AG04449 (cell line): ENCODE measurements at regions of chr18 and their contacts with region 1.

Region 1: GRCh38 chr18:24488824-24489493 is 28.5 kb downstream of the HRH4 start:
- DNase-seq: no peak
- H3K4me3 ChIP-seq: no peak overlapping the region
- CTCF ChIP-seq: peak; percentile 34

Region 2: GRCh38 chr18:24270358-24270936 is 218.5 kb before region 1 on chr18:
- CTCF ChIA-PET with region 1: no interaction called
- POLR2A ChIA-PET with region 1: no interaction called
- DNase-seq: no peak
- H3K4me3 ChIP-seq: peak overlapping the region; percentile 81
- CTCF ChIP-seq: no peak

Region 3: GRCh38 chr18:24322584-24323136 is 166.3 kb before region 1 on chr18:
- CTCF ChIA-PET with region 1: no interaction called
- POLR2A ChIA-PET with region 1: no interaction called
- DNase-seq: peak; percentile 33
- H3K4me3 ChIP-seq: no peak overlapping the region
- CTCF ChIP-seq: no peak

Region 4: GRCh38 chr18:24362758-24363157 is 126.2 kb before region 1 on chr18:
- CTCF ChIA-PET with region 1: interaction called, 183 read pairs
- POLR2A ChIA-PET with region 1: no interaction called
- DNase-seq: no peak
- H3K4me3 ChIP-seq: no peak overlapping the region
- CTCF ChIP-seq: no peak

Region 5: DNA sequence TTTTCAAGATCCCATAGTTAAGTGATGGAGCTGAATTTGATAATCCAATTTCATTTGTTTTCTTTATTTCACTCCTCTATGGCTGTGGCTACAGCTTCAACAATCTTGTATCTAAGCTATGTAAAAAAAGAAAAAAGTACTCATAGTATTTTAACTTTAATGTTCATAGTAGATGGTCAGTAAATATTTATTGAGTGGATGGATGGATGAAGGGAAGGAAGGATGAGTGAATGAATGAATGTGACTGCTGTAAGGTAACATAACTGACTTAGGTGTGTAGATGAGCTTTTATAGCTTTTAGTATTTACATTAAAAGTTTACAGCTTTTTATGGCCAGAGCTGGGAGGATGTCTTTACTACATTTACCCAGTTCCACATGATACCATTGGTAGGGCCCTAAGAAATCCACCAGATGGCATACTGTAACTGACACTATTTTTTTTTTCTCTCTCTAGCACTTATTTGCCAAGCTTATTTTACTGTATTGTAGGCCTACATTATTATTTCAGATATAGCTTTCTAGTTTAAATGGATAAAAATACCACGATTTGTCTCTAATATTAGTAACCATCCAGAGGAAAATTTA is 41.9 kb before region 1 on chr18:
- CTCF ChIA-PET with region 1: interaction called, 20 read pairs
- POLR2A ChIA-PET with region 1: no interaction called
- DNase-seq: no peak
- H3K4me3 ChIP-seq: no peak overlapping the region
- CTCF ChIP-seq: peak; percentile 14

Region 6: DNA sequence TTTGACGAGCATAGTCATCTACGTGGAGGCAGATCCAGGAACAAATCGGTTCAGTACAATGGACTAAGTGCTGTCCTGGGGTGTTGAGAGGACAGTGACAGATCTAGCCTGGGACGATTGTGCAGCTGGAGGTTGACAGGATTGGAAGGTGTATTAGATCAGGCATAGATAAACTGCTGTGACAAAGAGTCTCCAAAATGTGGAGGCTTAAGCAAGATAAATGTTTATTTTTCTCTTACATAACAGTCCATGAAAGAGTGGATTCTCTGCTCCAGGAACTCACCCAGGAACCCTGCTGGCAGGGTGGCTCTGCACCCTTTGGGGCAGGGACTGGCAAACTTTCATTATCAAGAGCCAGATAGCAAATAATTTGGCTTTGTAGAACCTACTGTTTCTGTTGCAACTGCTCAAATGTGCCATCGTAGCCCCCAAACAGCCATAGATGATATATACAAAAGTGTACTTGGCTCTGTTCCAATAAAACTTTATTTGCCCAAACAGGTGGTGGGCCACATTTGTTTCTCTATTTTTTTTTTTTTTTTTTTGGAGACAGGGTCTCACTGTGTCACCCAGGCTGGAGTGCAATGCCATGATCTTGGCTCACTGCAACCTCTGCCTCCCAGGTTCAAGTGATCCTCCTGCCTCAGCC is 18.9 kb before region 1 on chr18:
- CTCF ChIA-PET with region 1: interaction called, 35 read pairs
- POLR2A ChIA-PET with region 1: no interaction called
- DNase-seq: no peak
- H3K4me3 ChIP-seq: no peak overlapping the region
- CTCF ChIP-seq: no peak

Region 7: DNA sequence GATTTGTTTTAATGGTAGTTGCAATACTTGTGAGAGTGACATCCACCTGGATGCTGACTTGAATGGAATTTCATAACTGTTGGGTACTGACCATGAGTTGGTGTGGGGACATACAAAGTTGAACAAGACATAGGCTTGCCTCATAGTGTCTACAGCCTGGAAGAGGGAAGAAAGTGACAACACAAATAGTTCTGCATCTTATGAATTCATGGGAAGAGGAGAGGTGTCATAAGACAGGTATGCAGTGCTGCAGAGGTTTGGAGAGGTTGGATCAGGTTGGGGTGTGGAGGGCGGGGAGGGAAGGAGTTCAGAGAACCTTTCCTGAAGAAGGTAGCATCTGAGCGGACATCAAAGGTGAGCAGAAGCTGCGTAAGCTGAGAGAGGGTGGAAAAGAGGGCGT is 15.4 kb after region 1 on chr18:
- CTCF ChIA-PET with region 1: interaction called, 96 read pairs
- POLR2A ChIA-PET with region 1: no interaction called
- DNase-seq: no peak
- H3K4me3 ChIP-seq: no peak overlapping the region
- CTCF ChIP-seq: no peak

Region 8: DNA sequence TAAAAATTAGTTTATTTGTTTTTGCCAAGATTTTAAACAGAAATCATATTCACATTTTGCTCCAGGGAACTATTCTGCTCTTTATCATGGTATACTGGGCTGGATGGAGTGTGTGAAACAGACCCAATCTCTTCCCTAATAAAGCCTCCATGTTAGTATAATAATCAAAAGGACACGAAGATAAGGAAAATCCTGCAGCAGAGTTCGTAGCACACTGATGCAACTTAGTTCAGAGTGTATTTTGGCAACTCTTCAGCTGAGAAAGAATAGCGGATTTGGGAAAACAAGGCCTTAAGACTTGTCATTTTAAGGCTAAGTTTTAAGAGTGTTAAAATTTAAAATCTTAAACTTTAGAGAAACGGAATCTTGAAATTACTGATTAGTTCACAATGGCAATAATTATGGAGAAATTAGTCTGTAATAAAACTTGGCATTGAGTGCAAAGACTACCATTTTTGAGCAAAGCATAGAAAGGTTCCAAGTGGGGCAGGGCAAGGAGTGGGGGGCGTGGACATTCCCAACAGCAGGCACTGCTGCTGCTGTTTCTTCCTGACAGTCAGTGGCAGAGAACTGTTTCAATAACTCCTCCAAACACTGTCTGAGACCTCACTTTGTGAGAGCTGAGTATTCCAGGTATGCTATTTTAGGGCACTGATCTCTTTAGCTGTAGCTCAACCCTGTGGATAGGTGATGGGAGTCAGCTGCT is 196.4 kb after region 1 on chr18:
- CTCF ChIA-PET with region 1: no interaction called
- POLR2A ChIA-PET with region 1: no interaction called
- DNase-seq: no peak
- H3K4me3 ChIP-seq: no peak overlapping the region
- CTCF ChIP-seq: no peak

Region 9: GRCh38 chr18:24731981-24732380 is 243.0 kb after region 1 on chr18:
- CTCF ChIA-PET with region 1: interaction called, 226 read pairs
- POLR2A ChIA-PET with region 1: interaction called, 4 read pairs
- DNase-seq: no peak
- H3K4me3 ChIP-seq: no peak overlapping the region
- CTCF ChIP-seq: no peak